ENCODE measurements at regions of chr17 and their contacts with region 1.

Region 1: GRCh38 chr17:79839363-79840268 is at the start of gene CBX4:
- DNase-seq: peak; percentile 76 to 92 (median 88)
- ATAC-seq: peak; percentile 89
- H3K4me3 ChIP-seq: peak within 1 kb of the TSS; percentile 78
- H3K4me3 Mint-ChIP-seq: peak within 1 kb of the TSS; percentile 93 to 99 (median 96)
- H3K27ac ChIP-seq: peak within 1 kb of the TSS; percentile 78
- H3K27ac Mint-ChIP-seq: peak within 1 kb of the TSS; percentile 95 to 99 (median 97)
- H3K4me1 ChIP-seq: peaks cover 60 to 72% of the 10 kb centered on the region in 2 donors
- H3K4me1 Mint-ChIP-seq: peaks cover 11 to 58% (median 28%) of the 10 kb centered on the region in 7 donors
- H3K27me3 ChIP-seq: peaks cover 15 to 34% of the 10 kb centered on the region in 2 donors
- H3K27me3 Mint-ChIP-seq: peaks cover 13 to 34% (median 18%) of the 10 kb centered on the region in 5 donors
- total RNA-seq, gene CBX4: 37.7 to 134 (median 84.4) TPM

Region 2: DNA sequence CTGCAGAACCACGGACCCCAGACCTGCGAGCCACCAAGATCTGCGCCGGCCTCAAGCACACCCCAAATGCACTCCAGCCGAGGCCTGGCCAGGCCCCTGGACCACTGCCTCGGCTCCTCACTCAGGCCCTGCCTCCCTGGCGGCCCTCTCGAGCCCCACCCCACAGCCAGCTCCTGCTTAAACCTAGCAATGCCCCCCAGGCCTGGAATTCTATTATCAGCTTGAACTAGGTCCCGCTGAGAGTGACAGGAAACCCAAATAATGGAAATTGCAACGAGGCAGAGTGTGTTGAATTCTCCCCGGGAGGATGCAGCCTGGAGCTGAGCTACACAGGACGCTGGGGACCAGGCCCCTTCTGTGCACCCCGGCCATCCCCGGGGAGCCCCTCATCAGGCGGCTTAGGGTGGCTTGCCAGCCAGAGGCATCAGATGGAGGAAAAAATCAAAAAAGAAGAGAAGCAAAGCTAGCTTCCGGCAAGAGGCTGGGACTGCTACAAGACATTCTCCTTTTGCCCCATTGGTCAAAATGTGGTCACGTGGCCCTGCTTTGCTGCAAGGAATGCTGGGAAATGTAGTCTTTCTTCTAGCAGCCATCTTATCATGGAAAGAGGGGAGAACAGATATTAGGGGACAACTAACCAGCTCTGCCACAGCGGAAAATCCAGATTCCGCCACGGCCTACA is 111.2 kb before region 1 on chr17:
- CTCF ChIA-PET with region 1: no interaction called
- POLR2A ChIA-PET with region 1: interaction called, 3 read pairs
- intact Hi-C with region 1: loop called in 1 of 2 experiments (anchors 5 kb)
- DNase-seq: peak; percentile 62 to 91 (median 86)
- ATAC-seq: peak; percentile 91
- H3K4me3 ChIP-seq: peak overlapping the region; percentile 31
- H3K4me3 Mint-ChIP-seq: peak overlapping the region; percentile 53 to 85 (median 76)
- H3K27ac ChIP-seq: peak overlapping the region; percentile 56
- H3K27ac Mint-ChIP-seq: peak overlapping the region; percentile 72 to 92 (median 87)
- H3K4me1 ChIP-seq: peaks cover 4 to 12% of the 10 kb centered on the region in 2 donors
- H3K4me1 Mint-ChIP-seq: peaks cover 5 to 38% (median 21%) of the 10 kb centered on the region in 7 donors
- H3K27me3 ChIP-seq: no peaks in the 10 kb centered on the region
- H3K27me3 Mint-ChIP-seq: no peaks in the 10 kb centered on the region

Region 3: DNA sequence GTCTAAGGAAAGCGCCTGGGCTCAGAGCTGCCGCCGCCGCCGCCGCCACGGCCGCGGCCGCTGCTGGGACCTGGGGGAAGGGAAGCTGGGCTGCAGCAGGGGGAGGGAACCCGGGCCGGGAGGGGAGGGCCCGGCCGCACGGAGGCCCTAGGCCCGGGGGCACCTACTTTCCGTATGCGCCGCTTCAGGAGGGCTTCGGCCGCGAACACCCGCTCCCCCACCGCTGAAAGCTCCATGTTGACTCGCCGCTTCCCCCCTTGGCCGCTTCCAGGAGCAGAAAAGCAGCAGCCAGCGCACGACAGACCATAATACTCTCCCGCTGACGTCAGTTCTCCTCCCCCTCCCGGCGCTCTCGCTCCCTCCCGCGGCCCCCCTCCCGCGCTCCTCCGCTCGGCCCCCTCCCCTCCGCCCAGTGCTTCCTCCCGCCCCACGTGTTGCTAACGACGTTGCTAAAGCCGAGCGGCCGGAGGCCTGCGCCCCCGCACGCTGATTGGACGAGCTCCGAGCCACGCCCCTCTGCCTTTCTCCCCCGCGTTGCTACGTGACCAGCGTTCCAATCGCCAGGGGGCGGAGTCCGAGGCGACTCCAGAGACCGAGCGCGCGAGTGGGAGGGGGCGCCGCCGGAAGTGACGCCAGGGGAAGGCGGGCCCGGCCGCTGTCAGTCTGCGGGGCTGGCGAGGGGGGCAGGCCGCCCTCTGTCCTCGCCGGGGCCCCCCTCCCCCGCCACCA is 42.7 kb before region 1 on chr17 and contains the start of gene CBX8:
- CTCF ChIA-PET with region 1: interaction called, 4 read pairs
- POLR2A ChIA-PET with region 1: interaction called, 16 read pairs
- intact Hi-C with region 1: loop called (anchors 1 kb)
- DNase-seq: peak; percentile 97 to 99 (median 98)
- ATAC-seq: peak; percentile 95
- H3K4me3 ChIP-seq: peak within 1 kb of the TSS; percentile 54
- H3K4me3 Mint-ChIP-seq: peak within 1 kb of the TSS; percentile 84 to 92 (median 87)
- H3K27ac ChIP-seq: peak within 1 kb of the TSS; percentile 77
- H3K27ac Mint-ChIP-seq: peak within 1 kb of the TSS in 8 of 9 donors; percentile 75 to 95 (median 90)
- H3K4me1 ChIP-seq: peaks cover 31 to 39% of the 10 kb centered on the region in 2 donors
- H3K4me1 Mint-ChIP-seq: peaks cover 17 to 54% (median 34%) of the 10 kb centered on the region in 7 donors
- H3K27me3 ChIP-seq: peaks cover 29 to 32% of the 10 kb centered on the region in 2 donors
- H3K27me3 Mint-ChIP-seq: peaks cover 24 to 51% (median 34%) of the 10 kb centered on the region in 5 donors
- total RNA-seq, gene CBX8: 2.4 to 11.9 (median 3.0) TPM

Region 4: GRCh38 chr17:79810130-79811010 is 29.2 kb before region 1 on chr17:
- CTCF ChIA-PET with region 1: interaction called, 5 read pairs
- POLR2A ChIA-PET with region 1: interaction called, 51 read pairs
- intact Hi-C with region 1: loop called (anchors 1 kb)
- DNase-seq: peak; percentile 56 to 84 (median 74)
- ATAC-seq: peak; percentile 94
- H3K4me3 ChIP-seq: no peak overlapping the region
- H3K4me3 Mint-ChIP-seq: peak overlapping the region in 9 of 10 donors; percentile 39 to 75 (median 55)
- H3K27ac ChIP-seq: no peak overlapping the region
- H3K27ac Mint-ChIP-seq: peak overlapping the region in 4 of 9 donors; percentile 9 to 78 (median 22)
- H3K4me1 ChIP-seq: peaks cover 23 to 40% of the 10 kb centered on the region in 2 donors
- H3K4me1 Mint-ChIP-seq: peaks cover 18 to 40% (median 32%) of the 10 kb centered on the region in 7 donors
- H3K27me3 ChIP-seq: peaks cover 40 to 73% of the 10 kb centered on the region in 2 donors
- H3K27me3 Mint-ChIP-seq: peaks cover 53 to 74% (median 59%) of the 10 kb centered on the region in 5 donors

Region 5: DNA sequence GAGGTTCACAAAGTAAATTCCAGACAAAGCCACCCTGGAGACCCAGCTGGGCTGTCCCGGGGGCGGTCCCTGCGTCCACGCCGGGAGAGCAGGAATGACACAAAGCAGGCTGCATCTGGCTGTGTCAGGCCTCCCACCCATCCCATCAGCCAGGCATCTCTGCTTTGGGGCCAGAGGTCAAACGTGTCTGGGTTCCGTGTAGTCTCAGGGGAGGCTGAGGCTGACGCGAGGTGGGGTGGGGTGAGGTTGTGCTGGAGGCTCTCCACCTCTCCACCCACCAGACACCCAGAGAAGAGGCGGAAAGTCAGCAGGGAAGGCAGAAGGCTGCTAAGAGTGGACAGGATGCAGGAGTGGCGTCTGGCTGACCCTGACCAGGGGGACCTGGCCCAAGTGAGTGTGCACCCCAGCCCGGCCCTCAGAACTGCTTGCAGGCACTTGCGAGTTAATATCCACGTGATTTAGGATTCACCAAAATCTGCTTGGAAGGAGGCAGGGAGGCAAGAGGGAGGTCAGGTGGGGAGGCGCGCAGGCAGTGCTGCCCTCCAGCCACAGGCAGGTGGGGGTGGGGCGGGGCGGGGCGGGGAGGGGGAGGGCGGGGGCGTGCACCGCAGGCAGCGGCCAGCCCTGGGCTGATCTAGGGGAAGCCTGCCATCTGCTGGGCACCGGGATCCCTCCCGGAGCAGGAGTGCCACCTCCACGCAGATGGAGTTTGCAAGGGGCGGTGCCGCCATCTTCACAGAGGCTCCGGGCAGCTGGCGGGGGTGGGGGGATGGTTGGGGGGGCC is 151.7 kb after region 1 on chr17:
- CTCF ChIA-PET with region 1: interaction called, 5 read pairs
- POLR2A ChIA-PET with region 1: interaction called, 9 read pairs
- intact Hi-C with region 1: loop called (anchors 1 to 5 kb)
- DNase-seq: peak; percentile 64 to 84 (median 79)
- ATAC-seq: peak; percentile 96
- H3K4me3 ChIP-seq: peak overlapping the region; percentile 56
- H3K4me3 Mint-ChIP-seq: peak overlapping the region; percentile 42 to 87 (median 78)
- H3K27ac ChIP-seq: peak overlapping the region; percentile 51
- H3K27ac Mint-ChIP-seq: peak overlapping the region in 8 of 9 donors; percentile 52 to 83 (median 62)
- H3K4me1 ChIP-seq: peaks cover 23 to 34% of the 10 kb centered on the region in 2 donors
- H3K4me1 Mint-ChIP-seq: peaks cover 22 to 45% (median 29%) of the 10 kb centered on the region in 7 donors
- H3K27me3 ChIP-seq: no peaks in the 10 kb centered on the region
- H3K27me3 Mint-ChIP-seq: peaks cover 0 to 4% (median 0%) of the 10 kb centered on the region in 5 donors

Region 6: GRCh38 chr17:80035943-80036714 is 196.5 kb after region 1 on chr17 and contains the start of gene CCDC40:
- CTCF ChIA-PET with region 1: no interaction called
- POLR2A ChIA-PET with region 1: no interaction called
- intact Hi-C with region 1: loop called in 1 of 2 experiments (anchors 1 kb)
- DNase-seq: peak; percentile 66 to 85 (median 78)
- ATAC-seq: peak; percentile 91
- H3K4me3 ChIP-seq: peak within 1 kb of the TSS; percentile 81
- H3K4me3 Mint-ChIP-seq: peak within 1 kb of the TSS; percentile 78 to 94 (median 85)
- H3K27ac ChIP-seq: peak within 1 kb of the TSS; percentile 76
- H3K27ac Mint-ChIP-seq: peak within 1 kb of the TSS; percentile 60 to 96 (median 84)
- H3K4me1 ChIP-seq: peaks cover 4 to 6% of the 10 kb centered on the region in 2 donors
- H3K4me1 Mint-ChIP-seq: peaks cover 5 to 18% (median 9%) of the 10 kb centered on the region in 7 donors
- H3K27me3 ChIP-seq: peaks cover 0 to 3% of the 10 kb centered on the region in 2 donors
- H3K27me3 Mint-ChIP-seq: peaks cover 0 to 63% (median 10%) of the 10 kb centered on the region in 5 donors
- total RNA-seq, gene CCDC40: 0.43 to 3.0 (median 0.79) TPM

Region 7: GRCh38 chr17:81394921-81395599 is 1555.4 kb after region 1 on chr17 and contains the start of gene BAHCC1:
- CTCF ChIA-PET with region 1: no interaction called
- POLR2A ChIA-PET with region 1: no interaction called
- intact Hi-C with region 1: loop called in 1 of 2 experiments (anchors 10 kb)
- DNase-seq: peak; percentile 47 to 68 (median 63)
- ATAC-seq: peak; percentile 82
- H3K4me3 ChIP-seq: no peak within 1 kb of the TSS
- H3K4me3 Mint-ChIP-seq: peak within 1 kb of the TSS; percentile 47 to 69 (median 59)
- H3K27ac ChIP-seq: no peak within 1 kb of the TSS
- H3K27ac Mint-ChIP-seq: peak within 1 kb of the TSS in 7 of 9 donors; percentile 17 to 84 (median 54)
- H3K4me1 ChIP-seq: peaks cover 46% of the 10 kb centered on the region in 2 donors
- H3K4me1 Mint-ChIP-seq: peaks cover 0 to 48% (median 21%) of the 10 kb centered on the region in 7 donors
- H3K27me3 ChIP-seq: peaks cover 28 to 64% of the 10 kb centered on the region in 2 donors
- H3K27me3 Mint-ChIP-seq: peaks cover 31 to 66% (median 46%) of the 10 kb centered on the region in 5 donors
- total RNA-seq, gene BAHCC1: 0.05 to 3.8 (median 0.68) TPM in 4 of 5 experiments, not detected in the other